Panc1 (cell line): ENCODE measurements at regions of chr13 and their contacts with region 1.

Region 1: DNA sequence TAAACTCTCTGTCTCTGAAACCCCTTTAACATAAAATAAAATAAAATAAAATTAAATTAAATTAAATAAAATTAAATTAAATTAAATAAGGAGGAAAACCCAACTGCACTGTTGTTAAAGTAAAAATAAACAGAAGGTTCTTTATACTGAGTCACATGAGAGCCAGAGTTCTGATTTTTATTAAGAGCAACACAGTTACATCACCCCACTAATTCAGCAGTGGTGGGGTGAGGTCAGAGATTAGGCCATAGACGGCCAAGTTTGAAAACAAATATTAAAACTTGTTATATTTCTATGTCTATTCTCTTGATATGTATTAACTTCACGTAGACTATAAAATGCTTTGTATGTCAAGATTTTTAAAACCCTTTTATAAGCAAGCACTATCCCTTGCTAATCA is 59.5 kb downstream of the MYCBP2 start:
- DNase-seq: no peak
- ATAC-seq: no peak
- H3K4me3 ChIP-seq: no peak overlapping the region
- H3K27ac ChIP-seq: no peak overlapping the region
- H3K4me1 ChIP-seq: no peaks in the 10 kb centered on the region
- H3K27me3 ChIP-seq: no peaks in the 10 kb centered on the region
- CTCF ChIP-seq: no peak

Region 2: DNA sequence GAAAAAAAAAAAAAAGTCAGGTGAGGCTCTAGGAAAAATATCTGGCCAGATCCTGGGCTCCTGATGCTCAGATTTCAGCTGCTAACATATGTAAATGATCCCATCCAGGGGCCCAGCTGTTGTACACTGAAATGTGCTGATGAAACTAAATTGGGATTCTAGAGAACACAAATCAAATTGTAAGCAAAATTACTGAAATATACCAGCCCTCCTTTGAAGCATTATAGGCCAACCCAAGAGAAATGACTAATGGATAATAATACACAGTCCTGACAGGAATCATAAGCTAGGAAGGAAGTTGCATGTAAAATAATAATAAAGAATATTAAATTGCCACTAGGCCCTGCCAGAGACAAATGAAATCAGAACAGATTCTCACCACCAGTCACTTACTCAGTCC is 399.0 kb before region 1 on chr13:
- CTCF ChIA-PET with region 1: no interaction called
- POLR2A ChIA-PET with region 1: no interaction called
- in situ Hi-C with region 1: no loop called
- intact Hi-C with region 1: no loop called
- DNase-seq: no peak
- ATAC-seq: no peak
- H3K4me3 ChIP-seq: no peak overlapping the region
- H3K27ac ChIP-seq: no peak overlapping the region
- H3K4me1 ChIP-seq: no peaks in the 10 kb centered on the region
- H3K27me3 ChIP-seq: no peaks in the 10 kb centered on the region
- CTCF ChIP-seq: no peak

Region 3: DNA sequence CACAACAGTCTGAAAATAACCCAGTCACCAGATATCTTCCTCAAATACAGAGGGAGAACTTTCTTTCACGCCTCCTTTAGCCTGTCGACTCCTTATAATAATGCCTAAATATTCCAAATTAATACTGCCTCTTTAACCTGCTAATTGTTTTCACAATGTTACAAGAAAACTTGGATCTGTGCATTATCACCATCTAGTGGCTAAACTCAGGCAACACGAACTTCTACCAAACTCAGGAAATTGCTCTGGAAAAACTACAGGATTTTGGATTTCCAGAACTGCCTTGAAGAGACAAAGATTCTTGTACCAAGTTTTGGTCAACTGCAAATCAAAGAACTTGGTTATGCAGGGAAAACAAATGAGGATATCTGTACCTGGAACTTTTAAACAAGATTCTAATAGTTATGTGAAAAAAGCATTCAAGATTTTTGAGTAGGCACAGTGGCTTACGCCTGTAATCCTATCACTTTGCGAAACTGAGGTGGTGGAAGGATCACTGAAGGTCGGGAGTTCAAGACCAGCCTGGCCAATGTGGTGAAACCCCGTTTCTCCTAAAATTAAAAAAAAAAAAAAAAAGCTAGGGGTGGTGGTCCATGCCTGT is 264.7 kb before region 1 on chr13:
- CTCF ChIA-PET with region 1: no interaction called
- POLR2A ChIA-PET with region 1: interaction called, 13 read pairs
- in situ Hi-C with region 1: no loop called
- intact Hi-C with region 1: no loop called
- DNase-seq: no peak
- ATAC-seq: no peak
- H3K4me3 ChIP-seq: no peak overlapping the region
- H3K27ac ChIP-seq: no peak overlapping the region
- H3K4me1 ChIP-seq: no peaks in the 10 kb centered on the region
- H3K27me3 ChIP-seq: no peaks in the 10 kb centered on the region
- CTCF ChIP-seq: peak; percentile 68; the same call in 1 of the 2 replicates

Region 4: DNA sequence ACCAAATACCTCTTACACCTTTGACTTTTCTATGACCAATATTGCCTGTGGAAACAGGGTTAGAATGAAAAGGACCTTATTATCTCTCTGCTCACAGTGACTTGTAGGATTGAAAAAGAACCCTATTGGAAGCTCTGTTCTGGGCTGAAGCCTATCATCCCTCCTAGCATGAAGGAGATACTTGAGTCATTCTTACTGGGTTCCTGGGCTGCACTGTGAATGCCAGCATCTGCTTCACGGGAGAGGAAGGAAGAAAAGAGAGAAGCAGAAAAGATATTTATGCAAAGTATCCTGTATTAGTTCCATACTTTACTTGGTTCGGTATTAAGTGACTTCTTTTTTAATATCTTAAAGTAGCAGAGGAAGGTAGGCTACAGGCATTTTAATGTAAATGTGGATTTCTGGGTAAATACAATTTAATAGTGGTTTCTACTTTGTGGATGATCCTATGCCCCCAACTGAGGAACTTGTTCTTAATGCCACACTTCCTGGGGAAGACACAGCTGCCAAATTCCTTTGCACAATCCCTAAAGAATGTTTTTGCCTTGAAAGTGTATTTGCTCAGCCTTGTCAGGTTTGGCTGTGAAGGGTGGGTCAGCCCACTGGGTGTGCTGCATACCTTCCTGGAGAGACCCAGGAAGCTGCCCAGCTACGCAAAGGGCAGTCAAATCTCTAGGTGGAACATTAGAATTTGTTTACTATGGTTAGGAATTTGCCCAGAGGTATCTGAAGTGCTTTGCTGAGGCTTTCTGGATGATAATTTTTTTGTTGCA is 254.4 kb after region 1 on chr13:
- CTCF ChIA-PET with region 1: no interaction called
- POLR2A ChIA-PET with region 1: no interaction called
- in situ Hi-C with region 1: no loop called
- intact Hi-C with region 1: no loop called
- DNase-seq: no peak
- ATAC-seq: no peak
- H3K4me3 ChIP-seq: no peak overlapping the region
- H3K27ac ChIP-seq: no peak overlapping the region
- H3K4me1 ChIP-seq: no peaks in the 10 kb centered on the region
- H3K27me3 ChIP-seq: no peaks in the 10 kb centered on the region
- CTCF ChIP-seq: no peak